HCT116 (cell line): ENCODE measurements at regions of chr3 and their contacts with region 1.

Region 1: GRCh38 chr3:7607676-7608075 is 746.8 kb downstream of the GRM7 start:
- DNase-seq: no peak
- ATAC-seq: no peak
- H3K4me3 ChIP-seq: no peak overlapping the region
- H3K27ac ChIP-seq: no peak overlapping the region
- H3K4me1 ChIP-seq: no peaks in the 10 kb centered on the region
- H3K27me3 ChIP-seq: no peaks in the 10 kb centered on the region
- CTCF ChIP-seq: no peak
- POLR2A ChIP-seq: no peak
- RAD21 ChIP-seq: no peak

Region 2: GRCh38 chr3:7015683-7016440 is 591.8 kb before region 1 on chr3:
- CTCF ChIA-PET with region 1: no interaction called
- POLR2A ChIA-PET with region 1: no interaction called
- RAD21 ChIA-PET with region 1: no interaction called
- intact Hi-C with region 1: no loop called
- DNase-seq: peak; percentile 6
- ATAC-seq: no peak
- H3K4me3 ChIP-seq: no peak overlapping the region
- H3K27ac ChIP-seq: no peak overlapping the region
- H3K4me1 ChIP-seq: no peaks in the 10 kb centered on the region
- H3K27me3 ChIP-seq: no peaks in the 10 kb centered on the region
- CTCF ChIP-seq: no peak
- POLR2A ChIP-seq: no peak
- RAD21 ChIP-seq: no peak

Region 3: DNA sequence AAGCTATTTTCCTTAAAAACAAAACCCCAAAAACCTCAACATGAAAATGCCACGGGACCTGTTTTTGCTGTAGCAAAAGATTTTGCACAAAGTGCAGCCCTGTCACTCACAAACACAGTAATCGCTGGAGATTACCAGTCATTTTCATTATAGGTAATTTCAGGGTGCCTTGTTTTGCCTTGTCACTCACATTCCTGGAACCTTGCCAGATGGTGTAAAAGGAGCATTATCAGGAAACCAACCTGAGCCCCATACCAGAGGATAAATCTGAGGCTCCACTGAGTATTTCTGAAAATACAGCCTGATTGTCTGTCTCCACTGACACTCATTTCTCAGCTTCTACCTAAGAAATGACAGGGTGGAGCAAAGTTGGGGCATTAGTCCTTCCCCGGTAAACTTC is 102.6 kb after region 1 on chr3:
- CTCF ChIA-PET with region 1: no interaction called
- POLR2A ChIA-PET with region 1: no interaction called
- RAD21 ChIA-PET with region 1: no interaction called
- intact Hi-C with region 1: no loop called
- DNase-seq: no peak
- ATAC-seq: no peak
- H3K4me3 ChIP-seq: no peak overlapping the region
- H3K27ac ChIP-seq: no peak overlapping the region
- H3K4me1 ChIP-seq: peaks cover 2 to 13% of the 10 kb centered on the region in 2 experiments
- H3K27me3 ChIP-seq: no peaks in the 10 kb centered on the region
- CTCF ChIP-seq: no peak
- POLR2A ChIP-seq: no peak
- RAD21 ChIP-seq: no peak

Region 4: DNA sequence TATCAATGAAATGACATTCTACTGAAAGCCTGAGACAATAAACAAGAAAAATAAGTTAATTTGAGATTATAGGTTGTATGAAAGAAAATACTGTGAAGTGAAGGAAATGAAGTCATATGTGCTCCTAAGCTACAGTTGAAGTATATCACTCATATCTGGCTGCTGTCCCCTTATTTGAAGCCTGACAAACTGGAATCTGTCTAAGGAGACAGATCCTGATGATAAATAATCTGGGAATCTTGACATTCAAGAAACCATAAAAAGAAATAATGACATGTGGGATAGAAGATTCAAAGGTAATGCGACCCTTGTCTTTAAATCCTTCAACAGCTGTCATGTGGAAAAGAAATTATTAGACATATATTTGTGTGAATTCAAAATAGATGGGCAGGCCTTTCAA is 469.4 kb after region 1 on chr3:
- CTCF ChIA-PET with region 1: no interaction called
- POLR2A ChIA-PET with region 1: no interaction called
- RAD21 ChIA-PET with region 1: no interaction called
- intact Hi-C with region 1: loop called (anchors 1 kb)
- DNase-seq: no peak
- ATAC-seq: no peak
- H3K4me3 ChIP-seq: no peak overlapping the region
- H3K27ac ChIP-seq: no peak overlapping the region
- H3K4me1 ChIP-seq: no peaks in the 10 kb centered on the region
- H3K27me3 ChIP-seq: no peaks in the 10 kb centered on the region
- CTCF ChIP-seq: no peak
- POLR2A ChIP-seq: no peak
- RAD21 ChIP-seq: no peak